ENCODE measurements at regions of chr1 and their contacts with region 1.

Region 1: DNA sequence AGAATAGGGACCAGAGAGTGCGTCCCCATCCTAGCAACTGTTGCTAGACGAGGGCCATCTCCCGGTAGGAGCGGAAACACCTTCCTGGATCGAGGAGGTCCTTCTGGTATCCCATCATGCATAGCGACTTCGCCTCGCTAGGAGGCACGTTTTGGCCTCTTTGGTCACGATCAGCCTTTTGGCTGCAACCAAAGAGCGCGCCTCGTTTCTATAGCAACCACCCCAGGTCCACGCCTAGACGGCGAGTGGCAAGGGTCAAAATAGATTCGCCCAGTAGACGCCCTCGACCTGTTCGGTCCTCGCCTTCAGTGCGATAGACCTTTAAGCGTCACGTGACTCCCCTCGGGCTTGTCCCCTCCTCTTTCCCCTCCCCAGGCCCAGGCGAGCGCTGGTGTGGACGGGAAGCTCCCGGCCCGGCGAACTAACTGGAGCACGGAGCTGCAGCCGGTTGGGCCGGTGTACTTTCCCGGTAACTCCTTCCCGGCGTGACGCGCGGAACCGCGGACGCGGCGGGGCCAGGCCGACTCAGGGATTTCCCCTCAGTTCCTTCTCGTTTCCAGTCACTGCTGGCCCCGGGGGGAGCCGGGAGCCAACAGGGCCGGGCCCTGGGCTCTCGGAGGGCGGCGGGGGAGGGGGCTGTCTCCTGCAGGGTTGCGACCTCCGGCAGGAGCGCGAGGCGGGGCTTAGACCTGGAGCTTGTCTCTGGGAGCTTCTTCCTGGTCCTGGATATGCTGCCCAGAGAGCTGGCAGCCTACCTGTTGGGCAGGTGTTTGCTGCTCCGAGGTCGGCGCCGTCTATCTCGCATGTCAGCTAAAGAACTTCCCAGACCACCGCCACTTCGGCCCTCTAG is at the start of gene DNAJC16:
- DNase-seq: peak; percentile 98
- H3K4me3 Mint-ChIP-seq: peak within 1 kb of the TSS; percentile 83
- H3K27ac Mint-ChIP-seq: peak within 1 kb of the TSS; percentile 95
- H3K4me1 Mint-ChIP-seq: peaks cover 57% of the 10 kb centered on the region
- H3K27me3 Mint-ChIP-seq: no peaks in the 10 kb centered on the region
- total RNA-seq, gene DNAJC16: 18.8 and 19.8 TPM in 2 replicates

Region 2: DNA sequence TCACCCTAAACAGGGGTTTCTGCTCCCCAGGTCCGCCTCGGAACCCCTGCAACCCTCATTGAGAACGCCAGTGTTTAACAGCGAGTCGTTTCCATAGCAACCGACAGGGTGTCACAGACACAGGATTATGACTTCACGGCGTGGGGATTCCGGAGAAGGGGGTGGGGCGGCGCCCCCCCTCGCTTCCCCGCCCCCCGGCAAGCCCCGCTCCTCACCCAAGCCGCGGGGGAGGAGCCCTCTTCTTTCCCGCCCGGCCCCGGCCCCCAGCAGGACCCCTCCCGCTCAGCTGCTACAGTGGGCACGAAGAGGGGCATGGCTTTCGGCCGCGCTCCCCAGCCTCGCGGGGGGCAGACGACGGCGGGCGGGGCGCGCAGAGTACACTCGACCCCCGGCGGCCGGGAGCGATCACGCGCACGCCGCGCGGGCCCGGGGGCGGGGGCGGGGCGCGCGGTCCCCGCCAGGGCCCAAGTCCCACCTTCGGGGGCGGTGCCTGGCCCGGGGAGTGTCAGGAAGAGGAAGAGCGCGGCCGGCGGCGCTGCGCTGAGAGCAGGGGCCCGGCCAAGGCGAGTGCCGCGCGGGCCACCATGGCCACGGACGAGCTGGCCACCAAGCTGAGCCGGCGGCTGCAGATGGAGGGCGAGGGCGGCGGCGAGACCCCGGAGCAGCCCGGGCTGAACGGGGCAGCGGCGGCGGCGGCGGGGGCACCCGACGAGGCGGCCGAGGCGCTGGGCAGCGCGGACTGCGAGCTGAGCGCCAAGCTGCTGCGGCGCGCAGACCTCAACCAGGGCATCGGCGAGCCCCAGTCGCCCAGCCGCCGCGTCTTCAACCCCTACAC is 117.1 kb before region 1 on chr1 and contains the start of gene EFHD2:
- intact Hi-C with region 1: loop called (anchors 1 kb)
- DNase-seq: peak; percentile 83
- H3K4me3 Mint-ChIP-seq: peak within 1 kb of the TSS; percentile 96
- H3K27ac Mint-ChIP-seq: peak within 1 kb of the TSS; percentile 94
- H3K4me1 Mint-ChIP-seq: peaks cover 47% of the 10 kb centered on the region
- H3K27me3 Mint-ChIP-seq: peaks cover 29% of the 10 kb centered on the region
- total RNA-seq, gene EFHD2: 100 and 101 TPM in 2 replicates

Region 3: GRCh38 chr1:15603050-15603965 is 76.6 kb after region 1 on chr1:
- intact Hi-C with region 1: loop called (anchors 5 kb)
- DNase-seq: peak; percentile 91
- H3K4me3 Mint-ChIP-seq: peak overlapping the region; percentile 80
- H3K27ac Mint-ChIP-seq: peak overlapping the region; percentile 55
- H3K4me1 Mint-ChIP-seq: peaks cover 6% of the 10 kb centered on the region
- H3K27me3 Mint-ChIP-seq: no peaks in the 10 kb centered on the region

Region 4: GRCh38 chr1:15678578-15678977 is 151.9 kb after region 1 on chr1:
- intact Hi-C with region 1: no loop called
- DNase-seq: no peak
- H3K4me3 Mint-ChIP-seq: no peak overlapping the region
- H3K27ac Mint-ChIP-seq: no peak overlapping the region
- H3K4me1 Mint-ChIP-seq: peaks cover 7% of the 10 kb centered on the region
- H3K27me3 Mint-ChIP-seq: peaks cover 6% of the 10 kb centered on the region

Region 5: GRCh38 chr1:15835741-15836510 is 309.2 kb after region 1 on chr1:
- intact Hi-C with region 1: loop called (anchors 1 kb)
- DNase-seq: peak; percentile 99
- H3K4me3 Mint-ChIP-seq: peak overlapping the region; percentile 95
- H3K27ac Mint-ChIP-seq: peak overlapping the region; percentile 99
- H3K4me1 Mint-ChIP-seq: peaks cover 22% of the 10 kb centered on the region
- H3K27me3 Mint-ChIP-seq: peaks cover 3% of the 10 kb centered on the region

Region 6: GRCh38 chr1:16366722-16367257 is 840.1 kb after region 1 on chr1 and contains the start of gene SZRD1:
- intact Hi-C with region 1: loop called (anchors 2 kb)
- DNase-seq: peak; percentile 94
- H3K4me3 Mint-ChIP-seq: peak within 1 kb of the TSS; percentile 96
- H3K27ac Mint-ChIP-seq: peak within 1 kb of the TSS; percentile 99
- H3K4me1 Mint-ChIP-seq: peaks cover 38% of the 10 kb centered on the region
- H3K27me3 Mint-ChIP-seq: peaks cover 3% of the 10 kb centered on the region
- total RNA-seq, gene SZRD1: 212 and 216 TPM in 2 replicates

Measured in activated T-helper 1 cell treated with anti-CD3 and anti-CD28 coated beads, Interleukin-12 subunit alpha, Interleukin-12 subunit beta, Interleukin-2, Interleukin-4 antibody, amounts not matched to agents 30 ng/mL and 10 ng/mL and 1 ng/mL, durations not matched to agents 14 hours and 24 hours and 36 hours (primary cell).